PC-9 (cell line): ENCODE measurements at regions of chr11 and their contacts with region 1.

Region 1: GRCh38 chr11:128172046-128172878 is 415.1 kb downstream of the ETS1 start:
- DNase-seq: peak; percentile 57 to 77
- H3K4me3 ChIP-seq: no peak overlapping the region
- H3K27ac ChIP-seq: no peak overlapping the region
- H3K4me1 ChIP-seq: peaks cover 7% of the 10 kb centered on the region; the same call in 1 of the 2 replicates
- H3K27me3 ChIP-seq: no peaks in the 10 kb centered on the region
- CTCF ChIP-seq: peak; percentile 89

Region 2: DNA sequence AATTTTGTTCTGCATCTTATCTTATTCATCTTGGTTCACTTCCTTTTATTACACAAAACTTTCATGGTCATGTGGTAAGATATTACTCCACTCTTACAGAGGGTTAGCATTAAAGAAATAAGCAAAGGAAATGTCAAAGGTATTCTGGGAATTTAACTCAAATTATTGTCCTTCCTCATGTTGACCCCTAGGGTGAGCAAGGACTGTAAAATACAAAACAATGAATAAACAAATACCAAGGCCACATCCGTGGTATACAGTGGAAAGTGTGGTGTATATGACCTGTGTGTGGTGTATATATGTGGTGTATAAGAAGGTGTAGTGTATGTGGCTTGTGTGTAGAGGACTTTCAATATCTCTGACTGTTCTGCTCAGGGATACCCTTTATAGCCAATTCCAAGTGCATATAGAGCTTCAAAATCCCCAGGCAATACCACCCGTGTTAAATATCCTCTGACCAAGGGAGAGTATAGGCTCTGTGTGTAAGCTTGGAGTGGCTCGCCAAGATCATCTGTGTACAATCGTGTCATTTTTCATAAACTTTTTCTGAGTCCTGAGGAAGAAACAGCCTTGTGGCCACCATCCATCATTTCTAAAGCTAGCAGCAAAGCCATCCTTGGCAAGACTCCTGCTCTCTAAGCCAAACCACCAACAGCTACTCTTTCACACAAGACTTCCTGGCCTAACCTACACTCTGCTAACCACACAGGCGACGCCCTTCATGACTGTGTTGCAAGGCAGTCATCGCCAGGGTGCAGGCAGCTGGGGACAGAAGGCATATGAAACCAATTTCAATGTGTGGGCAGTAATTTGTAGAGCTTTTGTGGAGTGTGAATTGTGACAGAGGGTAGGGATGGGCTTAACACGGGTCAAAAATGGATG is 132.9 kb before region 1 on chr11:
- CTCF ChIA-PET with region 1: interaction called, 10 read pairs
- POLR2A ChIA-PET with region 1: no interaction called
- intact Hi-C with region 1: loop called (anchors 5 kb)
- DNase-seq: peak in 1 of 2 experiments; percentile 45
- H3K4me3 ChIP-seq: no peak overlapping the region
- H3K27ac ChIP-seq: no peak overlapping the region
- H3K4me1 ChIP-seq: no peaks in the 10 kb centered on the region
- H3K27me3 ChIP-seq: no peaks in the 10 kb centered on the region
- CTCF ChIP-seq: no peak

Region 3: DNA sequence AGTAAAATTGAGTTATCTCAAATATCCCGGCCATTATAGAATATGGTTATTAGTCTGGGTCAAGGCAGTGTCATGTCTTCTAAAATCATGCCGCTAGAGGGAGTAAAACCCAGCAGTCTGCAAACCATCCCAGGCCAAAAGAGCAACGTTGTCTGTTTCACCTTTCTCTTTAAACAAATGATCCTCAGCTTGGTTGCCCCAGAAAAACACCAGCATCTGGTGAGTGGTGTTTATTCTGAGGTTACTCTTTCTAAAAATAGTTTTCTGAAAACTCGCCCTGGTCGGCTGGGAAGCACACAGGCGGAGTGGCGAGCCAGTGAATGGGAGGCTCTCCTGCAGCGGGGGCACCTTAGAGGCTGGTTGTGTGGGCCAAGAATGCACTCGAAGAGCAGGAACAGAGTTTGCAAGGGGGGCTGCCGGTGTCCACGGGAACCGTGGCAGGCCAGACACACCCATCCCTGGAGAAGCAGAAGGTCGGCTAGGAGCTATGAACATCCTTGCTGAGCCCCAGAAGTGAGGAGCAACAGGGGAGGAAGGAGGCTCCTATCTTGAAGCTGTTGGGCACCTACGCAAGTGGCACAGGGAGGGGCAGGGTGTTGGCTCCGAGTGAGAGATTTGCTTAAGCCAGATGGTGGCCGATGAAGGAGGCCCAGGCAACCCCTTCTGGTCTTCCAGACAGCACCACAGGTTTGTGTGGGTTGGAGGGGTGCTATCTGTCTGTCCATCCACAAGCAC is 118.0 kb after region 1 on chr11:
- CTCF ChIA-PET with region 1: no interaction called
- POLR2A ChIA-PET with region 1: no interaction called
- intact Hi-C with region 1: loop called (anchors 1 kb)
- DNase-seq: peak; percentile 45 to 58
- H3K4me3 ChIP-seq: no peak overlapping the region
- H3K27ac ChIP-seq: no peak overlapping the region
- H3K4me1 ChIP-seq: peaks cover 18% of the 10 kb centered on the region
- H3K27me3 ChIP-seq: no peaks in the 10 kb centered on the region
- CTCF ChIP-seq: peak; percentile 93

Region 4: GRCh38 chr11:128448200-128448886 is 276.1 kb after region 1 on chr11:
- CTCF ChIA-PET with region 1: no interaction called
- POLR2A ChIA-PET with region 1: no interaction called
- intact Hi-C with region 1: loop called (anchors 10 kb)
- DNase-seq: peak; percentile 81 to 98
- H3K4me3 ChIP-seq: peak overlapping the region; percentile 38; the same call in 1 of the 2 replicates
- H3K27ac ChIP-seq: peak overlapping the region; percentile 96
- H3K4me1 ChIP-seq: peaks cover 24% of the 10 kb centered on the region
- H3K27me3 ChIP-seq: no peaks in the 10 kb centered on the region
- CTCF ChIP-seq: no peak

Region 5: GRCh38 chr11:128831174-128832120 is 659.2 kb after region 1 on chr11:
- CTCF ChIA-PET with region 1: interaction called, 12 read pairs
- POLR2A ChIA-PET with region 1: no interaction called
- intact Hi-C with region 1: loop called (anchors 1 kb)
- DNase-seq: peak; percentile 49 to 66
- H3K4me3 ChIP-seq: peak overlapping the region; percentile 6; the same call in 1 of the 2 replicates
- H3K27ac ChIP-seq: no peak overlapping the region
- H3K4me1 ChIP-seq: no peaks in the 10 kb centered on the region
- H3K27me3 ChIP-seq: no peaks in the 10 kb centered on the region
- CTCF ChIP-seq: peak; percentile 95

Region 6: GRCh38 chr11:128956401-128957201 is 784.3 kb after region 1 on chr11:
- CTCF ChIA-PET with region 1: no interaction called
- POLR2A ChIA-PET with region 1: no interaction called
- intact Hi-C with region 1: loop called (anchors 1 kb)
- DNase-seq: peak; percentile 50 to 69
- H3K4me3 ChIP-seq: no peak overlapping the region
- H3K27ac ChIP-seq: no peak overlapping the region
- H3K4me1 ChIP-seq: no peaks in the 10 kb centered on the region
- H3K27me3 ChIP-seq: no peaks in the 10 kb centered on the region
- CTCF ChIP-seq: peak; percentile 82